GM12878 (cell line): ENCODE measurements at regions of chr11 and their contacts with region 1.

Region 1: GRCh38 chr11:36492724-36493304 is 17.3 kb downstream of the TRAF6 start:
- DNase-seq: no peak
- ATAC-seq: peak; percentile 86
- H3K4me3 ChIP-seq: no peak overlapping the region
- H3K27ac ChIP-seq: no peak overlapping the region
- H3K4me1 ChIP-seq: peaks cover 6% of the 10 kb centered on the region; the same call in 1 of the 2 replicates
- H3K27me3 ChIP-seq: no peaks in the 10 kb centered on the region
- CTCF ChIP-seq: peak; percentile 67 to 79 (median 70)
- EP300 ChIP-seq: no peak
- POLR2A ChIP-seq: no peak
- RAD21 ChIP-seq: peak; percentile 88

Region 2: DNA sequence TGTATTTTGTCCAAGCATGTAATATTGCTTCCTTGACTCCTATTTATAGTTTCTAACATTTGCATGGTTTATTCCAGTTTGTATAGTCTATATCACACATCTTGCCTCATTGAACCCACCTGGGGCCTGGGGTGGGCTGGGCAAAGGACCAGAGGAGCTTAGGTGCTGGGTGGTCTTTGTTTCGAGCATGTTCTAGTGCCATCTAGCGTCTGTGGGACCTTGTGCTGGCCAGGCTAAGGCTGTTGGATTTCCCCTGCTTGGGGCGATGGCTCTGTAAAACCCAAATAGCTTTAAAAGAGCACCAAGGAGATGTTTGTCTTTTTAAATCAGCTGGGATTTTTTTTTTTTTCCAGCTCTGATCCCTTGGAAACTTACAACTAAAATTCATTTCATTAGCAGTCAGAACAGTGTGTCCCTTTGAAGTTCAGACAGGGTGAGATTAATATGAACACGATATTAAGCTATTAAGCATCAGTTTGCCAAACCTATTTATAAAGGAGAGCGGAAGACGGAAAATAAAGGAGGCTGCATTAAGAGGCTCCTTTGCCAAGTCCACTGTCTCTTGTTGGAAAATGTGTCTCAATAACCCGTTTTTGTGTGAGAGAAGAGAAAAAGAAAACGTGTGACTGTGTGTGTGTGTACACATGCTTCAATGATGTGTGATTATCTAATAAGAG is 361.0 kb before region 1 on chr11:
- CTCF ChIA-PET with region 1: interaction called, 4 read pairs
- POLR2A ChIA-PET with region 1: no interaction called
- RAD21 ChIA-PET with region 1: no interaction called
- SMC1A ChIA-PET with region 1: no interaction called
- in situ Hi-C with region 1: no loop called
- intact Hi-C with region 1: loop called (anchors 10 kb)
- DNase-seq: no peak
- ATAC-seq: peak; percentile 95
- H3K4me3 ChIP-seq: no peak overlapping the region
- H3K27ac ChIP-seq: no peak overlapping the region
- H3K4me1 ChIP-seq: no peaks in the 10 kb centered on the region
- H3K27me3 ChIP-seq: peaks cover 0 to 2% of the 10 kb centered on the region in 2 experiments; a peak in 2 of 4 replicates
- CTCF ChIP-seq: peak; percentile 63 to 77 (median 74)
- EP300 ChIP-seq: no peak
- POLR2A ChIP-seq: no peak
- RAD21 ChIP-seq: peak; percentile 78

Region 3: DNA sequence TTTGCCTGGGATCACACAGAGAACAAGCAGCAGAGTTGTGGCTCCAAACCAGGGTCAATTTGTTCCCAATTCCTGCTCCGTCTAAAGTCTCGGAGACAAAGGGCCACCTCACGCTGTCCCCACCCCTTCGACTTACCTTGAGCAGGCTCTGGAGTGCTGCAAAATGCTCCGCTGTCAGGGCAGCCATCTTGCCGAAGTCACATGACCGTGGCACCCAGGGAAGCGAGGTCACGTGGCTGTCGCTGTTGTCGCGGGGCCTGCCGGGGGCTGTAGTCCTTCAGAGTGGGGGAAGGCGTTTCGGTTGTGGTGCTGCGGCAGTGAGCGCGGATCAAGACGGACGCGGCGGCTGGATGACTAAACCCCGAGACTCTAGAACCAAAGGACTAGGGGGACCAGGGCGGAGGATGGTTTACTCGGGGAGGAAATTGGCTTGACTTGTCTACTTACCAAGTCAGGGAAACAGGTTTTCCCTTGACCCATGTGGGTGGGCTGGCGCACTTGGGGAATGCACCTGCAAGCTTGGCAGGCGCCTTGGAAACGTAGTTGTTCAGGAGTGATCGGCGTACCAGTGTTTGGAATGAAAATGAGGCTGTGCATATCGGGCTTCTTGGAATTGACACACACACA is 203.5 kb before region 1 on chr11 and contains the start of gene COMMD9:
- CTCF ChIA-PET with region 1: interaction called, 176 read pairs
- POLR2A ChIA-PET with region 1: interaction called, 5 read pairs
- RAD21 ChIA-PET with region 1: interaction called, 102 read pairs
- SMC1A ChIA-PET with region 1: interaction called, 87 read pairs
- in situ Hi-C with region 1: loop called (anchors 5 kb)
- intact Hi-C with region 1: loop called (anchors 1 kb)
- DNase-seq: peak; percentile 56
- ATAC-seq: peak; percentile 98
- H3K4me3 ChIP-seq: peak within 1 kb of the TSS; percentile 93
- H3K27ac ChIP-seq: no peak within 1 kb of the TSS
- H3K4me1 ChIP-seq: peaks cover 3% of the 10 kb centered on the region; the same call in 1 of the 2 replicates
- H3K27me3 ChIP-seq: no peaks in the 10 kb centered on the region
- CTCF ChIP-seq: no peak
- EP300 ChIP-seq: no peak
- POLR2A ChIP-seq: peak; percentile 88
- RAD21 ChIP-seq: peak; percentile 19; the same call in 1 of the 2 replicates
- polyA plus RNA-seq, gene COMMD9: 102 to 119 TPM

Region 4: GRCh38 chr11:36306888-36307287 is 185.9 kb before region 1 on chr11:
- CTCF ChIA-PET with region 1: interaction called, 28 read pairs
- POLR2A ChIA-PET with region 1: no interaction called
- RAD21 ChIA-PET with region 1: interaction called, 9 read pairs
- SMC1A ChIA-PET with region 1: interaction called, 22 read pairs
- in situ Hi-C with region 1: no loop called
- intact Hi-C with region 1: loop called (anchors 1 kb)
- DNase-seq: no peak
- ATAC-seq: peak; percentile 79
- H3K4me3 ChIP-seq: no peak overlapping the region
- H3K27ac ChIP-seq: no peak overlapping the region
- H3K4me1 ChIP-seq: no peaks in the 10 kb centered on the region
- H3K27me3 ChIP-seq: no peaks in the 10 kb centered on the region; a peak in 1 of 4 replicates
- CTCF ChIP-seq: peak; percentile 46 to 62 (median 50); a peak in 5 of 6 replicates
- EP300 ChIP-seq: no peak
- POLR2A ChIP-seq: no peak
- RAD21 ChIP-seq: peak; percentile 83

Region 5: DNA sequence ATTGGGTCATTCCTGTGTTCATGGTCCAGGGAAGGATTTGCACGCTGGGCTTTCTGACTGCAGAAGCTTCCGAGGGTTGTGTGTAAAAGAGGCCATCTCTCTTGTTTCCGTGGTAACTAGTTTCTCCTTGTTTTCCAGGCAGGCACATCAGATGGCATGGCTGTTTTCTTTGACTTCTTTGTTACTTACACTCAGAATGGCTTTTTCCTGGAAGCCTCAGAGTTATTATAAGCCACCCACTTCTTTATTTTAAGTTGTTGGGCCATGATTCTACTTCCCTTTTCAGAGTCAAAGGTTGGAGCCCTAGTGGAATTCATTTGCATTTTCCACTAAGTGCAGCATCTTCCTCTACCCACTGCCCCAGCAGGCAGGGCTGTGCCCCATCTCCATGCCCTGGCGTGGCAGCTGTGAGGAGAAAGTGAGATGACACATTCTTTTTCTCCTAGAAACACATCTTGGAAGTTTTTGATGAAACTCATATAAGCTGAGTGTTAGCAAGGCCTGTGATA is 101.8 kb before region 1 on chr11:
- CTCF ChIA-PET with region 1: no interaction called
- POLR2A ChIA-PET with region 1: no interaction called
- RAD21 ChIA-PET with region 1: no interaction called
- SMC1A ChIA-PET with region 1: no interaction called
- in situ Hi-C with region 1: no loop called
- intact Hi-C with region 1: no loop called
- DNase-seq: no peak
- ATAC-seq: peak; percentile 56
- H3K4me3 ChIP-seq: no peak overlapping the region
- H3K27ac ChIP-seq: no peak overlapping the region
- H3K4me1 ChIP-seq: peaks cover 4% of the 10 kb centered on the region; the same call in 1 of the 2 replicates
- H3K27me3 ChIP-seq: no peaks in the 10 kb centered on the region
- CTCF ChIP-seq: no peak
- EP300 ChIP-seq: no peak
- POLR2A ChIP-seq: no peak
- RAD21 ChIP-seq: no peak

Region 6: GRCh38 chr11:36478700-36479329 is 14.0 kb before region 1 on chr11:
- CTCF ChIA-PET with region 1: interaction called, 118 read pairs
- POLR2A ChIA-PET with region 1: no interaction called
- RAD21 ChIA-PET with region 1: interaction called, 22 read pairs
- SMC1A ChIA-PET with region 1: interaction called, 36 read pairs
- in situ Hi-C with region 1: no loop called
- intact Hi-C with region 1: no loop called
- DNase-seq: no peak
- ATAC-seq: peak; percentile 79
- H3K4me3 ChIP-seq: no peak overlapping the region
- H3K27ac ChIP-seq: no peak overlapping the region
- H3K4me1 ChIP-seq: no peaks in the 10 kb centered on the region
- H3K27me3 ChIP-seq: no peaks in the 10 kb centered on the region
- CTCF ChIP-seq: peak; percentile 34 to 75 (median 52); a peak in 5 of 6 replicates
- EP300 ChIP-seq: no peak
- POLR2A ChIP-seq: no peak
- RAD21 ChIP-seq: peak; percentile 89

Region 7: GRCh38 chr11:36541001-36541400 is 48.2 kb after region 1 on chr11:
- CTCF ChIA-PET with region 1: interaction called, 13 read pairs
- POLR2A ChIA-PET with region 1: no interaction called
- RAD21 ChIA-PET with region 1: interaction called, 5 read pairs
- SMC1A ChIA-PET with region 1: interaction called, 4 read pairs
- in situ Hi-C with region 1: no loop called
- intact Hi-C with region 1: no loop called
- DNase-seq: peak; percentile 32
- ATAC-seq: peak; percentile 97
- H3K4me3 ChIP-seq: no peak overlapping the region
- H3K27ac ChIP-seq: no peak overlapping the region
- H3K4me1 ChIP-seq: no peaks in the 10 kb centered on the region
- H3K27me3 ChIP-seq: peaks cover 2% of the 10 kb centered on the region in 2 experiments; a peak in 3 of 4 replicates
- CTCF ChIP-seq: peak; percentile 38 to 62 (median 54); a peak in 5 of 6 replicates
- EP300 ChIP-seq: peak; percentile 57 to 65; a peak in 3 of 4 replicates
- POLR2A ChIP-seq: no peak
- RAD21 ChIP-seq: peak; percentile 56